Left ventricle myocardium inferior (tissue), 1 donor: ENCODE measurements at regions of chr6 and their contacts with region 1.

Region 1: DNA sequence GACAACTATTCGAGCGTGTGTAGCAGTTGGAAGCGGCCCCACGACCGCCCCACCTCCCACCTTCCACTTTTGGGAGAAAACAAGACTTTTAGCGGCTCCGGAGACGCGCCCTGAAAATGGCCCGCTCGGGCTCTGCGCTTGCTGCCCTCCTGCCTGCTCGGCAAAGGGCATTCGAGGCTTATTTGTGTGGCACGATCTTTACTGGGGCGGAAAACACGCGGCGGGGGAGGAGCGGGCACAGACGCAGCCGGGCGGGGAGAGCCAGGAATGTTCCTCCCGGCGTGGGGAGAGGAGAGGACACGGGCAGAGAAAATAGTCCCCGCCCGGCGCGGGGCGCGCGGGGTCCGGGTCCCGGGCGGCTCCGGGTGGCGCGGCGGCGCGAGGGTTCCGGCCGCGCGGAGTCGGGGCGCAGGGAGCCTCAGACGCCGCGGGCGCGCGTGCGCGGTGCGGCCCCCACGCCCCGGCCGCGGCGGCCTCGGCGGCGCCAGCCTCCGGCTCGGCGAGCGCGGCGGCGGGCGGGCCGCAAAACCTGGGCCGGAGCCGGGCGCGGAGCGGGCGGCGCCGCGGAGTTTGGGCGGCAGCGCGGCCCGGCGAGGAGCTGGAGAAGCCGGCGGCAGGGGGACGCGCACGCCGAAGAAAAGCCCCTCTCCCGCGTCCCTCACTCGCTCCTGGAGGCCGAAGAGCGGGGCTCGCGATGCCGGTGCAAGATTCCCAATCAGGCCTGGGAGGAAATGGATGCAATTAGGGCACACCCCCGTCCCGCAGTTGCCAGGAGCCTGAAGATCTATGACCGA is 90.0 kb upstream of the ARID1B start:
- DNase-seq: peak; percentile 93
- H3K4me3 ChIP-seq: peak overlapping the region; percentile 74
- H3K27ac ChIP-seq: peak overlapping the region; percentile 100
- H3K4me1 ChIP-seq: peaks cover 24% of the 10 kb centered on the region
- H3K27me3 ChIP-seq: no peaks in the 10 kb centered on the region
- CTCF ChIP-seq: no peak

Region 2: GRCh38 chr6:156564127-156564806 is 122.9 kb before region 1 on chr6:
- intact Hi-C with region 1: loop called (anchors 5 kb)
- DNase-seq: peak; percentile 78
- H3K4me3 ChIP-seq: peak overlapping the region; percentile 11
- H3K27ac ChIP-seq: peak overlapping the region; percentile 42
- H3K4me1 ChIP-seq: peaks cover 13% of the 10 kb centered on the region
- H3K27me3 ChIP-seq: no peaks in the 10 kb centered on the region
- CTCF ChIP-seq: peak; percentile 97